CD8-positive, alpha-beta T cell (primary cell): ENCODE measurements at regions of chr14 and their contacts with region 1.

Region 1: DNA sequence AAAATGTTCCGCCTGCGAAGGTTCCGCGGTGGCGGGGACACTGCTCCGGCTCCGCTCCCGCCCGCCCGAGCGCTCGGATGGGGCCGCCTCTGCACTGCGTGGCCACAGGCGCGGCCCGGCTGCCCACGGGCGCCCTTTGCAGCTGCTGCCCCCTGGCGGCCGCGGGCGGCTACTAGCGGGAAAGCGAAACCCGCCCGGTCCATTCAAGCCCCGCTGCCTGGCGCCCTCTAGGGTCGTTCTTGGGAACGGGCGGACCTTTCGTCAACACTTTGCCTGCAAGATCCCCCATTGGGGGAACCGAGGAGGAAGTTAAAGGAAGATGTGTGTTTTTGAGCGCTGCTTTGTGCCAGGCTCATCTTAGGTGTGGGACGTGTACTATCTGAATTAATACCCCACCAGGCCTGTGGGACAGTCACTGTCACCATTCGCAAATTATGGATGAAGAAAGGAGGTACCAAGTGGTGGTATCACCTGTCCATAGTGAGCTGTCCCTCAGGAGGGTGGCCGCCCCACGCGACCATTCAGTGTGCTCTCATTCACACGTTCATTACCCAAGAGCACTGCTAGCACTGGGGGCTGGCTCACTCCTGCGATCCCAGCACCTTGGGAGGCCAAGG is 19.4 kb downstream of the GPR132 start:
- DNase-seq: peak; percentile 86 to 98 (median 93)
- ATAC-seq: peak; percentile 90
- H3K4me3 ChIP-seq: no peak overlapping the region
- H3K4me3 Mint-ChIP-seq: no peak overlapping the region
- H3K27ac ChIP-seq: no peak overlapping the region
- H3K27ac Mint-ChIP-seq: peak overlapping the region; percentile 83
- H3K4me1 ChIP-seq: peaks cover 5% of the 10 kb centered on the region
- H3K4me1 Mint-ChIP-seq: peaks cover 9% of the 10 kb centered on the region
- H3K27me3 ChIP-seq: no peaks in the 10 kb centered on the region
- H3K27me3 Mint-ChIP-seq: no peaks in the 10 kb centered on the region
- CTCF ChIP-seq: peak; percentile 100

Region 2: GRCh38 chr14:104895786-104896661 is 149.8 kb before region 1 on chr14:
- CTCF ChIA-PET with region 1: interaction called, 4 read pairs
- POLR2A ChIA-PET with region 1: no interaction called
- intact Hi-C with region 1: loop called (anchors 1 to 2 kb)
- DNase-seq: peak in 3 of 9 experiments; percentile 7 to 11 (median 9)
- ATAC-seq: no peak
- H3K4me3 ChIP-seq: no peak overlapping the region
- H3K4me3 Mint-ChIP-seq: no peak overlapping the region
- H3K27ac ChIP-seq: no peak overlapping the region
- H3K27ac Mint-ChIP-seq: no peak overlapping the region
- H3K4me1 ChIP-seq: no peaks in the 10 kb centered on the region
- H3K4me1 Mint-ChIP-seq: no peaks in the 10 kb centered on the region
- H3K27me3 ChIP-seq: no peaks in the 10 kb centered on the region
- H3K27me3 Mint-ChIP-seq: peaks cover 3% of the 10 kb centered on the region
- CTCF ChIP-seq: no peak

Region 3: DNA sequence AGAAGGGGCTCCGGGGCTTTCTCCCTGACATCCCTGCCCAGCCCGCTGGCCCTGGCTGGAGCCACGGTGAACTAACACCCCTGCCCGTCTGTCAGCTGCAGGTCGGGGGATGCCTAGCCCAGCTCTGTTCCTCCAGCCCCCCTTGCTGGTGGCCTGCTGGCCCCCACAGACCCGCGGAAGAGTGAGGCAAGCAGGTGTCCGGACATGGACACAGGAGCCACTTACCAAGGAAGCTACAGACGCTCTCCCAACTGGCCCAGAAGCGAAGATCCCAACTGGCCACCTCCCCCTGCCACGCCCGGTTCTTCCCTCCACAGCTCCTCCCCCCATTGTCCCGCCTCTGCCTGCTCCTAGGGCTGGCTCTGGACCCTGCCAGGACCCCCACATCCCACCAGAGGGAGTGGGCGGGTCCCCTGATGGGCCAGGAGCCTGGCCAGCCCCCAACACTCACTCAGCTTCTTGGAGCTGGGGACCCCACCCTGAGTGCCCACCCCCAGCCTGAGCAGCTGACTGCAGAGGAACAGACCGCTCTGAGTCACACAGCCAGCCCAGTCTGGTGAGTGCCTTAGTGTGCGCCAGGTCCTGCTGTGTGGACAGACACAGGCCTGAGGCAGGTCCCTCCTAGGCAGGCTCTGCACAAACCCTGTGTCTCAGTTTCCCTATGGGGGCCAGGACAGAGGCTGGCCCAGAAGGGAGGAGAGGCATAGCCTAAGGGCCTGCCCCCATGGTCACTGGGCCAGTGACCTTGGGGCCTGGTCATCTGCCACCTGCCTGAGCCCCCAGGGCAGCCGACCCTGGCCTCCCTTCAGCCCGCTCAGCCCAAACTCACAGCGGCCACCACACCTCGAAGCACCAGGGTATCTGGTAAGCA is 75.4 kb before region 1 on chr14:
- CTCF ChIA-PET with region 1: interaction called, 172 read pairs
- POLR2A ChIA-PET with region 1: interaction called, 4 read pairs
- intact Hi-C with region 1: no loop called
- DNase-seq: no peak
- ATAC-seq: no peak
- H3K4me3 ChIP-seq: no peak overlapping the region
- H3K4me3 Mint-ChIP-seq: no peak overlapping the region
- H3K27ac ChIP-seq: no peak overlapping the region
- H3K27ac Mint-ChIP-seq: no peak overlapping the region
- H3K4me1 ChIP-seq: no peaks in the 10 kb centered on the region
- H3K4me1 Mint-ChIP-seq: no peaks in the 10 kb centered on the region
- H3K27me3 ChIP-seq: peaks cover 0 to 3% of the 10 kb centered on the region in 2 experiments
- H3K27me3 Mint-ChIP-seq: peaks cover 18% of the 10 kb centered on the region
- CTCF ChIP-seq: no peak

Region 4: GRCh38 chr14:104985675-104986525 is 59.9 kb before region 1 on chr14 and contains the start of gene CLBA1:
- CTCF ChIA-PET with region 1: interaction called, 75 read pairs
- POLR2A ChIA-PET with region 1: no interaction called
- intact Hi-C with region 1: loop called in 1 of 2 experiments (anchors 2 kb)
- DNase-seq: peak; percentile 75 to 97 (median 87)
- ATAC-seq: peak; percentile 94
- H3K4me3 ChIP-seq: peak within 1 kb of the TSS; percentile 54 to 60
- H3K4me3 Mint-ChIP-seq: peak within 1 kb of the TSS; percentile 78
- H3K27ac ChIP-seq: peak within 1 kb of the TSS; percentile 60 to 73
- H3K27ac Mint-ChIP-seq: peak within 1 kb of the TSS; percentile 57
- H3K4me1 ChIP-seq: peaks cover 8% of the 10 kb centered on the region
- H3K4me1 Mint-ChIP-seq: peaks cover 5% of the 10 kb centered on the region
- H3K27me3 ChIP-seq: no peaks in the 10 kb centered on the region
- H3K27me3 Mint-ChIP-seq: peaks cover 6% of the 10 kb centered on the region
- CTCF ChIP-seq: no peak
- total RNA-seq, gene CLBA1: 0.84 to 1.0 TPM

Region 5: GRCh38 chr14:105020815-105021655 is 24.8 kb before region 1 on chr14 and contains the start of gene CDCA4:
- CTCF ChIA-PET with region 1: interaction called, 74 read pairs
- POLR2A ChIA-PET with region 1: interaction called, 7 read pairs
- intact Hi-C with region 1: loop called (anchors 1 kb)
- DNase-seq: peak; percentile 97 to 99 (median 98)
- ATAC-seq: peak; percentile 82
- H3K4me3 ChIP-seq: peak within 1 kb of the TSS; percentile 58 to 87
- H3K4me3 Mint-ChIP-seq: peak within 1 kb of the TSS; percentile 89
- H3K27ac ChIP-seq: peak within 1 kb of the TSS; percentile 78 to 81
- H3K27ac Mint-ChIP-seq: peak within 1 kb of the TSS; percentile 96
- H3K4me1 ChIP-seq: peaks cover 23% of the 10 kb centered on the region
- H3K4me1 Mint-ChIP-seq: peaks cover 53% of the 10 kb centered on the region
- H3K27me3 ChIP-seq: no peaks in the 10 kb centered on the region
- H3K27me3 Mint-ChIP-seq: no peaks in the 10 kb centered on the region
- CTCF ChIP-seq: no peak
- total RNA-seq, gene CDCA4: 20.2 to 22.9 TPM

Region 6: DNA sequence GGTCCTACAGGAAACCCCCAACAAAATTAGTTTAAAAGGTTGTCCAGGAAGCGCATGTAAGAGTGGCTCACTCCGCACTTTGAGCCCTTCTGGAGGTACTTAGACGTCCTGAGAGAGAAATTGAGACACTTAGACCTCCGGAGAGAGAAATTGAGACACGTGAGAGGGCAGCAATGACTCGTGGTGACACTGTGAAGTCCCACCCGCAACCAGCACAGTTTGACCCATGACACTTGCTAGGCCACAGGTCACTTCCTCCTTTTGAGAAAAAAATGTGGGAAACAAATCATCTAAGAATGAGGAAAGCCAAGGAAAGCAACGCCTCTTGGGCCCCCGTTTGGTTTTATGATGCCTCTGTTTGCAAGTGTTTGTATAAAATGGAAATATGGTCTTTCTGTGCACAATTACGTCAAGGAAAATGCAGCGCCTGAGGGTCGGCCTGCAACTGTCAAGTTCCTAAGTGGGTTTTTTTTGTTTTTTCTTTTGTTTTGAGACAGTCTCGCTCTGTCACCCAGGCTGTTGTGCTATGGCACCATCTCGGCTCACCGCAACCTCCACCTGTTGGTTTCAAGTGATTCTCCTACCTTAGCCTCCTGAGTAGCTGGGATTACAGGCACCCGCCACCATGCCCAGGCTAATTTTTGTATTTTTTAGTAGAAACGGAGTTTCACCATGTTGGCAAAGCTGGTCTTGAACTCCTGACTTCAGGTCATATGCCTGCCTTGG is 11.3 kb before region 1 on chr14:
- CTCF ChIA-PET with region 1: interaction called, 18 read pairs
- POLR2A ChIA-PET with region 1: interaction called, 3 read pairs
- intact Hi-C with region 1: no loop called
- DNase-seq: no peak
- ATAC-seq: no peak
- H3K4me3 ChIP-seq: no peak overlapping the region
- H3K4me3 Mint-ChIP-seq: peak overlapping the region; percentile 31
- H3K27ac ChIP-seq: no peak overlapping the region
- H3K27ac Mint-ChIP-seq: no peak overlapping the region
- H3K4me1 ChIP-seq: peaks cover 8% of the 10 kb centered on the region
- H3K4me1 Mint-ChIP-seq: peaks cover 13% of the 10 kb centered on the region
- H3K27me3 ChIP-seq: no peaks in the 10 kb centered on the region
- H3K27me3 Mint-ChIP-seq: no peaks in the 10 kb centered on the region
- CTCF ChIP-seq: no peak